Caco-2 (cell line): ENCODE measurements at regions of chr17 and their contacts with region 1.

Region 1: DNA sequence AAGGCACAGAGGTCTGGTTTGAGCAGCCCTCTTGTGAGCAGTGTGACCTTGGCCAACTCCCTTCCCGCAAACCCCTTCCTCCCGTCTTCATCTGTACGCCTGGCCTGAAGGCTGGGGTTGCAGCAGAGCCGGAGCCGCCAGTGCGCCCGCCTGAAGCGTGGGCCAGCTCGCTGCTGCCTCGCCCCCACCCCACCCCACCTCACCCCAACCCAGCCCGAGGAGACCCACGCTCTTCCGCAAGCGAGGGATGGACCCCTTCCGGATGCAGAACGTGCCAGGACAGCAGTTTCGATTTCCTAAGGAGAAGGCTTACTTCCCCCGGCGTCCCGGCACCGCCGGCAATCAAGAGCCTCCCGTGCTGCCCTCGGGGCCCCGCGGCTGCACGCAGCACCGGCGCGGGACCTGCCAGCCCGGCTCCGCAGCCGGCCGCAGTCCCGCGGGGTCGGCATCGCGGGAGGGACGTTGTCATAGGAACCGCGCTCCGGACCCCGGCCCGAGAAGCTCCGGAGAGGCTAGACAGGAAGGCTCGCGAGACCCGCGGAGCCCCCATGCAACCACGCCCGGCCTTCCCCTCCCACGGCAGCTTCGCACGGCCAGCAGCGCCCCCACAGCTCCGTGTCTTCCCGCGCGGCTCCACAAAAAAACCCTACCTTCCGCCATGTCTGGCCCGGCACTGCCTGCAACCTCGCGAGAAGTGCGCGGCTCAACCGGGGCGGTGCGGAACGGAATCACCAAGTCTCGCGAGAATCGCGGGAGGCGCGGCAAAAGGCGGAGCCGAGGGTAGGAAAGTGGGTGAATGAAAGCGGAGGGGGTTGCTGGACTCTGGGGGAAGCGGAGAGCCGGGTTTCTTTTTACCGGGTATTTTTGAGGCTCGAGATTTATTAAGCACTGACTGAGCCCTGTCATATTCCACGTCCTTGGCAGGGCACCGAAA is at the start of gene ANKFY1:
- DNase-seq: peak; percentile 89 to 93
- H3K4me3 ChIP-seq: peak within 1 kb of the TSS; percentile 86
- H3K4me3 Mint-ChIP-seq: peak within 1 kb of the TSS; percentile 80
- H3K27ac Mint-ChIP-seq: peak within 1 kb of the TSS; percentile 97
- H3K4me1 ChIP-seq: no peaks in the 10 kb centered on the region
- H3K4me1 Mint-ChIP-seq: peaks cover 9% of the 10 kb centered on the region
- H3K27me3 ChIP-seq: no peaks in the 10 kb centered on the region
- H3K27me3 Mint-ChIP-seq: no peaks in the 10 kb centered on the region
- CTCF ChIP-seq: peak in 1 of 2 experiments; percentile 7
- total RNA-seq, gene ANKFY1: 25.0 and 27.5 TPM in 2 replicates

Region 2: GRCh38 chr17:4366327-4367063 is 102.9 kb after region 1 on chr17 and contains the start of gene UBE2G1:
- CTCF ChIA-PET with region 1: no interaction called
- POLR2A ChIA-PET with region 1: no interaction called
- intact Hi-C with region 1: loop called (anchors 5 kb)
- DNase-seq: peak; percentile 95
- H3K4me3 ChIP-seq: peak within 1 kb of the TSS; percentile 67
- H3K4me3 Mint-ChIP-seq: peak within 1 kb of the TSS; percentile 71
- H3K27ac Mint-ChIP-seq: peak within 1 kb of the TSS; percentile 75
- H3K4me1 ChIP-seq: no peaks in the 10 kb centered on the region
- H3K4me1 Mint-ChIP-seq: peaks cover 6% of the 10 kb centered on the region
- H3K27me3 ChIP-seq: no peaks in the 10 kb centered on the region
- H3K27me3 Mint-ChIP-seq: no peaks in the 10 kb centered on the region
- CTCF ChIP-seq: peak in 1 of 2 experiments; percentile 36
- total RNA-seq, gene UBE2G1: 50.5 and 56.8 TPM in 2 replicates